ENCODE measurements at regions of chr22 and their contacts with region 1.

Region 1: GRCh38 chr22:42560781-42561180 is 7.0 kb downstream of the SERHL2 start:
- DNase-seq: peak; percentile 50
- ATAC-seq: no peak
- H3K4me3 ChIP-seq: no peak overlapping the region
- H3K4me3 Mint-ChIP-seq: peak overlapping the region; percentile 7
- H3K27ac ChIP-seq: no peak overlapping the region
- H3K27ac Mint-ChIP-seq: no peak overlapping the region
- H3K4me1 ChIP-seq: peaks cover 13 to 19% of the 10 kb centered on the region in 2 donors
- H3K4me1 Mint-ChIP-seq: peaks cover 15% of the 10 kb centered on the region
- H3K27me3 ChIP-seq: no peaks in the 10 kb centered on the region
- H3K27me3 Mint-ChIP-seq: no peaks in the 10 kb centered on the region
- CTCF ChIP-seq: peak; percentile 48

Region 2: GRCh38 chr22:42528258-42528948 is 32.4 kb before region 1 on chr22:
- CTCF ChIA-PET with region 1: interaction called, 12 read pairs
- POLR2A ChIA-PET with region 1: no interaction called
- intact Hi-C with region 1: loop called (anchors 5 kb)
- DNase-seq: no peak
- ATAC-seq: no peak
- H3K4me3 ChIP-seq: no peak overlapping the region
- H3K4me3 Mint-ChIP-seq: no peak overlapping the region
- H3K27ac ChIP-seq: no peak overlapping the region
- H3K27ac Mint-ChIP-seq: peak overlapping the region; percentile 64
- H3K4me1 ChIP-seq: peaks cover under 1 to 18% of the 10 kb centered on the region in 2 donors
- H3K4me1 Mint-ChIP-seq: peaks cover 26% of the 10 kb centered on the region
- H3K27me3 ChIP-seq: no peaks in the 10 kb centered on the region
- H3K27me3 Mint-ChIP-seq: no peaks in the 10 kb centered on the region
- CTCF ChIP-seq: no peak

Region 3: GRCh38 chr22:42533638-42533977 is 27.2 kb before region 1 on chr22:
- CTCF ChIA-PET with region 1: interaction called, 12 read pairs
- POLR2A ChIA-PET with region 1: no interaction called
- intact Hi-C with region 1: loop called (anchors 5 kb)
- DNase-seq: no peak
- ATAC-seq: no peak
- H3K4me3 ChIP-seq: peak overlapping the region in 4 of 5 experiments; percentile 37 to 54 (median 53)
- H3K4me3 Mint-ChIP-seq: peak overlapping the region; percentile 90
- H3K27ac ChIP-seq: peak overlapping the region; percentile 92 to 93
- H3K27ac Mint-ChIP-seq: peak overlapping the region; percentile 97
- H3K4me1 ChIP-seq: peaks cover 38 to 66% of the 10 kb centered on the region in 2 donors
- H3K4me1 Mint-ChIP-seq: peaks cover 67% of the 10 kb centered on the region
- H3K27me3 ChIP-seq: no peaks in the 10 kb centered on the region
- H3K27me3 Mint-ChIP-seq: no peaks in the 10 kb centered on the region
- CTCF ChIP-seq: no peak

Measured in B cell (primary cell).